ENCODE measurements at regions of chr19 and their contacts with region 1.

Region 1: GRCh38 chr19:18521885-18522624 is at the start of gene ELL:
- DNase-seq: peak; percentile 100
- ATAC-seq: peak; percentile 89
- H3K4me3 ChIP-seq: peak within 1 kb of the TSS; percentile 85 to 91
- H3K4me3 Mint-ChIP-seq: peak within 1 kb of the TSS; percentile 95
- H3K27ac ChIP-seq: peak within 1 kb of the TSS; percentile 92 to 96
- H3K27ac Mint-ChIP-seq: peak within 1 kb of the TSS; percentile 95
- H3K4me1 ChIP-seq: peaks cover 9% of the 10 kb centered on the region
- H3K4me1 Mint-ChIP-seq: peaks cover 26% of the 10 kb centered on the region
- H3K27me3 ChIP-seq: no peaks in the 10 kb centered on the region
- H3K27me3 Mint-ChIP-seq: no peaks in the 10 kb centered on the region
- CTCF ChIP-seq: no peak
- total RNA-seq, gene ELL: 73.4 to 75.2 TPM

Region 2: GRCh38 chr19:18152444-18152816 is 369.6 kb before region 1 on chr19:
- CTCF ChIA-PET with region 1: no interaction called
- POLR2A ChIA-PET with region 1: no interaction called
- intact Hi-C with region 1: loop called in 1 of 2 experiments (anchors 10 kb)
- DNase-seq: peak; percentile 94 to 99 (median 99)
- ATAC-seq: peak; percentile 65
- H3K4me3 ChIP-seq: peak overlapping the region; percentile 66 to 71
- H3K4me3 Mint-ChIP-seq: peak overlapping the region; percentile 84
- H3K27ac ChIP-seq: peak overlapping the region; percentile 66 to 87
- H3K27ac Mint-ChIP-seq: peak overlapping the region; percentile 95
- H3K4me1 ChIP-seq: peaks cover 17% of the 10 kb centered on the region
- H3K4me1 Mint-ChIP-seq: peaks cover 23% of the 10 kb centered on the region
- H3K27me3 ChIP-seq: no peaks in the 10 kb centered on the region
- H3K27me3 Mint-ChIP-seq: no peaks in the 10 kb centered on the region
- CTCF ChIP-seq: peak; percentile 87

Region 3: DNA sequence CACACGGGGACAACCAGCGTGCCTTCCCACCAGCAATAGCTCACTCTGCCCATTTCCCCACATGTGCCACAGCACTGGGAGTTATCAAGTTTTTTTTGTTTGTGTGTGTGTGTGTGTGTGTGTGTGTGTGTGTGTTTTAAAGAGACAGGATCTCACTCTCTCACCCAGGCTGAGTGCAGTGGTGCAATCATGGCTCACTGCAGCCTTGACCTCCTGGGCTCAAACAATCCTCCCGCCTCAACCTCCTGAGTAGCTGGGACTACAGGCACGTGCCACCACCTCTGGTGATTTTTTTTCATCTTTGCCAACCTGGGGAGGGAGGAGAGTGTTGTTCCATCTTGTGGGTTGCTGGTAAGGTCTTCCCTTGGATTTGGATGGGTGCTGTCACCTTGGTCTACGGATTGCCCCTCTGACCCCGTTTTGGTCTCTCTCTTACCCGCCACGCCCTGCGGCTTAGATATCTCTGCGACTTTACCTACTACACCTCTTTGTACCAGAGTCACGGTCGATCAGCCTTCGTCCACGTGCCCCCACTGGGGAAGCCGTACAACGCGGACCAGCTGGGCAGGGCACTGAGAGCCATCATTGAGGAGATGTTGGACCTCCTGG is 159.0 kb before region 1 on chr19:
- CTCF ChIA-PET with region 1: no interaction called
- POLR2A ChIA-PET with region 1: no interaction called
- intact Hi-C with region 1: no loop called
- DNase-seq: no peak
- ATAC-seq: no peak
- H3K4me3 ChIP-seq: no peak overlapping the region
- H3K4me3 Mint-ChIP-seq: no peak overlapping the region
- H3K27ac ChIP-seq: no peak overlapping the region
- H3K27ac Mint-ChIP-seq: no peak overlapping the region
- H3K4me1 ChIP-seq: no peaks in the 10 kb centered on the region
- H3K4me1 Mint-ChIP-seq: no peaks in the 10 kb centered on the region
- H3K27me3 ChIP-seq: no peaks in the 10 kb centered on the region
- H3K27me3 Mint-ChIP-seq: no peaks in the 10 kb centered on the region
- CTCF ChIP-seq: no peak

Region 4: GRCh38 chr19:18475004-18475453 is 47.0 kb before region 1 on chr19:
- CTCF ChIA-PET with region 1: interaction called, 19 read pairs
- POLR2A ChIA-PET with region 1: no interaction called
- intact Hi-C with region 1: loop called in 1 of 2 experiments (anchors 1 kb)
- DNase-seq: peak in 5 of 9 experiments; percentile 42 to 89 (median 53)
- ATAC-seq: peak; percentile 72
- H3K4me3 ChIP-seq: no peak overlapping the region
- H3K4me3 Mint-ChIP-seq: no peak overlapping the region
- H3K27ac ChIP-seq: peak overlapping the region; percentile 42 to 91
- H3K27ac Mint-ChIP-seq: peak overlapping the region; percentile 90
- H3K4me1 ChIP-seq: peaks cover 55% of the 10 kb centered on the region
- H3K4me1 Mint-ChIP-seq: peaks cover 60% of the 10 kb centered on the region
- H3K27me3 ChIP-seq: no peaks in the 10 kb centered on the region
- H3K27me3 Mint-ChIP-seq: no peaks in the 10 kb centered on the region
- CTCF ChIP-seq: no peak

Region 5: DNA sequence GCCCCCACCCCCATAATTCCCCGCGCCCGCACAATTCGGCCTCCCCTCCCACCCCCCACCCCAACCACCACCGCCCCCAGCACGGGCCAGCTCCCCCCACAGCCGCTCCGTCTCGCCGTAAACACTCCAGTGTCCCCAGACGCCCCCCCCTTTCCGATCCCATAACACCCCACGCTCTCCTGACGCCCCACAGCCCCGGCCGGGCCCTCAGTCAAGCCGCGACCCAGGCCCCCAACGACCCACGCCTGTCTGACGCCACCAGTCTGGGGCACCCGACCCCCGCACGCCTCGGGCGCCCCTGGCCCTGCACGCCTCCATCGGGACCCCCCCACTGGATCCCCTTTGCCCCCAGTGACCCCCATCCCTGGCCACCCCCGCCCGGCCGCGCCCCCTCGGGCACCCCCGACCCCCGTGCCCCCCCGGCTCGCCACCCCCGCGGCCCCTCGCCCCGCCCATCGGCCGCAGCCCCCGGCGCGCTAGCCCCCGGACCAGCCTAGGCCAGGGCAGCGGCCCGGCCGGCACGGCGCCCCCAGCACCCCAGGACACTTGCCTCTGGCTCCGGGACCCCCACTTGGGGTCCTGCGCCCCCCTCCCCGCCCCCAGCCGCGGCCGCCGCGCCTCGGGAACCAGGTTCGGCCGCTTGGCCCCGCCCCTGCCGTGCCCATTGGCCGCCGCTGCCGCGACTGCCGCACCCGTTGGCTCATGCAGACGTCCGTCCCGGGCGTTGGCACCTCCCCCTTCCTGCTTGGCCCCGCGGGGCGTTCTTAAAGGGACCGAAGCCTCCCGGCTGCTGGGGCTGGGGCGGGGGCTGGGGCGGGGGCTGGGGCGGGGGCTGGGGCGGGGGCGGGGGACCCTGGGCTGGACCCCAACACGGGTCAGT is 21.1 kb after region 1 on chr19 and contains the start of gene FKBP8:
- CTCF ChIA-PET with region 1: interaction called, 16 read pairs
- POLR2A ChIA-PET with region 1: interaction called, 7 read pairs
- intact Hi-C with region 1: loop called (anchors 1 kb)
- DNase-seq: peak; percentile 86 to 96 (median 94)
- ATAC-seq: peak; percentile 97
- H3K4me3 ChIP-seq: peak within 1 kb of the TSS; percentile 58 to 62
- H3K4me3 Mint-ChIP-seq: peak within 1 kb of the TSS; percentile 89
- H3K27ac ChIP-seq: peak within 1 kb of the TSS; percentile 64 to 86
- H3K27ac Mint-ChIP-seq: peak within 1 kb of the TSS; percentile 96
- H3K4me1 ChIP-seq: peaks cover 20% of the 10 kb centered on the region
- H3K4me1 Mint-ChIP-seq: peaks cover 26% of the 10 kb centered on the region
- H3K27me3 ChIP-seq: no peaks in the 10 kb centered on the region
- H3K27me3 Mint-ChIP-seq: no peaks in the 10 kb centered on the region
- CTCF ChIP-seq: no peak
- total RNA-seq, gene FKBP8: 155 to 158 TPM

Region 6: DNA sequence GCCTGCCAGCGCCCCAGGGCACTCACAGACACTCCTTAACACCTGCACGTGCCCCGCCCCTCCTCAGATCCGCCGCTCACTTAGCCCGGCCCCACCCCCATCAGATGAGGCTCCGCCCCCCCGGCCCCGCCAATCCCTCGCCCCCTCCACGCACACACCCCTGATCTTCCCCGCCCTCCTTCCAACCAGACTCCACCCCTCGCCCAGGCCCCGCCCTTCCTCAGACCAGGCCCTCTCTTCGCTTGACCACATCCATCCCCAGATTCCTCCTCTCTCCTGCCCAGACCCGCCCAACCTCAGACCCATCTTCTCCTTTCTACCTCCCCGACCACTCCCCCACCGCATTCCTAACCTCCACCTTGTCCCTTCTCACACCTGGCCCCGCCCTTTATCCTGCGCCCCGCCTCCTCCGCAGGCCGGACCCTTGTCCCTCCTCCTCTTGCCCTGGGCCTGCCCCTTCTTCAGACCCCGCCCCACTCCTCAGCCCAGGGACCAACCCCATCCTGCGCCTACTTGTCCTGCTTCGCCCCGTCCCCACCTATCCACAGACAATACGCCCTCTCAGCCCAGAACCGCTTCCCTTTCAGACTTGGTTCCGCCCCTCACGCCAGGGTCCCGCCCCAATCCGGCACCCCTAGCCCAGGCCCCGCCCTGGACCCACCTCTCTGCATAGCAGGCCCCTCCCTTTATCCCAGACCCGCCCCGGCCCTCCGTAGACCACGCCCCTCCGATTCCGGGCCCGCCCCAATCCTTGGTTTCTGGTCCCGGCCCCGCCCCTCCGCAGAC is 114.3 kb after region 1 on chr19:
- CTCF ChIA-PET with region 1: interaction called, 3 read pairs
- POLR2A ChIA-PET with region 1: no interaction called
- intact Hi-C with region 1: loop called in 1 of 2 experiments (anchors 1 kb)
- DNase-seq: peak; percentile 97 to 100 (median 99)
- ATAC-seq: peak; percentile 87
- H3K4me3 ChIP-seq: peak overlapping the region; percentile 64 to 79
- H3K4me3 Mint-ChIP-seq: peak overlapping the region; percentile 89
- H3K27ac ChIP-seq: peak overlapping the region; percentile 14 to 78
- H3K27ac Mint-ChIP-seq: peak overlapping the region; percentile 82
- H3K4me1 ChIP-seq: peaks cover 22% of the 10 kb centered on the region
- H3K4me1 Mint-ChIP-seq: peaks cover 36% of the 10 kb centered on the region
- H3K27me3 ChIP-seq: no peaks in the 10 kb centered on the region
- H3K27me3 Mint-ChIP-seq: peaks cover 6% of the 10 kb centered on the region
- CTCF ChIP-seq: no peak

Region 7: GRCh38 chr19:18846862-18847548 is 324.9 kb after region 1 on chr19:
- CTCF ChIA-PET with region 1: interaction called, 19 read pairs
- POLR2A ChIA-PET with region 1: interaction called, 5 read pairs
- intact Hi-C with region 1: loop called (anchors 1 to 5 kb)
- DNase-seq: peak; percentile 37 to 81 (median 73)
- ATAC-seq: peak; percentile 65
- H3K4me3 ChIP-seq: no peak overlapping the region
- H3K4me3 Mint-ChIP-seq: peak overlapping the region; percentile 36
- H3K27ac ChIP-seq: no peak overlapping the region
- H3K27ac Mint-ChIP-seq: no peak overlapping the region
- H3K4me1 ChIP-seq: peaks cover 40% of the 10 kb centered on the region
- H3K4me1 Mint-ChIP-seq: peaks cover 56% of the 10 kb centered on the region
- H3K27me3 ChIP-seq: no peaks in the 10 kb centered on the region
- H3K27me3 Mint-ChIP-seq: no peaks in the 10 kb centered on the region
- CTCF ChIP-seq: peak; percentile 78

Measured in CD8-positive, alpha-beta T cell (primary cell).